Activated CD4-positive, alpha-beta T cell treated with anti-CD3 and anti-CD28 coated beads for 36 hours (primary cell): ENCODE measurements at regions of chr3 and their contacts with region 1.

Region 1: DNA sequence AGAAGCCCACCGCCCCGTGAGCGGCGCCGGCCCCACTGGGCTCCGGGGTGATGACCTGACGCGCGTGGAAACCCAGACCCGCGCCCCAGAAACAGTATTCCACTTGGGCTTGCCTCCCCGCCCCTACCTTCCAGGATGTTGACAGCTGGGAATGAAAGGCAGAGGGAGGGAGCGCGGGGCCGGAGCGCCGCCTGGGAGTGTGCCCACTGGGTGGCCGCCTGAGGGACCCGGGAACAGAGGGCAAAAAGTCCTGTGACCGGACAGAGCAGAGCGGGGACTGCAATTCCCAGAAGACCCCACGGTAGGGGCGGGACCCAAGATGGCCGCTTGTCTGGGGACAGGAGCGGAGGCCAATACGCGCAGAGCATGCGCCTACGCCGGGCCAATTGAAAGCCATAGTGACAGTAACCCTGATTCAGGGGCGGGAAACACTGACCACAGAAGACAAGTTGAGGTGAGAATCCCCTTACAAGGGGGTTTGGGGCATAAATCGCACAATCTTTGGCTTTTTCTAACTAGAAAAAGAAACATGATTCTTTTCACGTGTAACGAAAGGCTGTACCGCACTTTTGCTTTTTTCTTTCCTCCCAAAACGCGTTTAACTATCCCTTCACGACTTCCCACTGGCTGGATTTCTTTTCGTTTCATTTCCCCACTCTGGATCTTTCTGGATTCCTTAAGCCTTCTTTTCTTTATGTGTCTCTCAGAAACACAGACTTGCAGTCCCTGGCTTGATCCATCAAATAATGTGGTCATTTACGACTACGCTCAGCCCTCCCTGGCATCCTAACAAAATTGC is at the start of gene FHIT:
- DNase-seq: peak; percentile 96
- ATAC-seq: peak; percentile 95
- H3K4me3 Mint-ChIP-seq: peak within 1 kb of the TSS; percentile 84
- H3K27ac Mint-ChIP-seq: peak within 1 kb of the TSS; percentile 92
- H3K4me1 Mint-ChIP-seq: peaks cover 15% of the 10 kb centered on the region
- H3K27me3 Mint-ChIP-seq: peaks cover 2% of the 10 kb centered on the region
- total RNA-seq, gene FHIT: 10.2 to 13.1 TPM

Region 2: DNA sequence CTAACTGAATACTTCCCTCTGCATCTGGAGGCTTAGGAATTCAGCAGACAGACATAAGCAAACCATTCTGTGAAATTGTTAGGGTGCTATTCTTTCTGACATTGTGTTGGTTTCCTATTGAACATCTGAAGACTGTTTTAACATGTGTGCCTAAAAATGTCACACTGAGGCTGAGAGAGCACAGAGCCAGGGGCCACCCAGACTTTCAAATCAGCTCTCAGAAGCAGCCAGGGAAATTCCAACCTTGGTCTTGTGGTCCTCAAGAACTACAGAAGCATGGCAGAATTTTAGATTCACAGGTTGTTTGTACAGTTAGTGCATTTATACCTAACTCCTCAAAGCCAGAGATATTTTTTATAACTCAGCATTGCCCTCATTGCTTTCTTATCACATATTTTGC is 1272.4 kb before region 1 on chr3:
- CTCF ChIA-PET with region 1: no interaction called
- POLR2A ChIA-PET with region 1: no interaction called
- intact Hi-C with region 1: loop called in 1 of 2 experiments (anchors 10 kb)
- DNase-seq: peak; percentile 55
- ATAC-seq: peak; percentile 75
- H3K4me3 Mint-ChIP-seq: peak overlapping the region; percentile 21
- H3K27ac Mint-ChIP-seq: peak overlapping the region; percentile 89
- H3K4me1 Mint-ChIP-seq: peaks cover 55% of the 10 kb centered on the region
- H3K27me3 Mint-ChIP-seq: no peaks in the 10 kb centered on the region

Region 3: DNA sequence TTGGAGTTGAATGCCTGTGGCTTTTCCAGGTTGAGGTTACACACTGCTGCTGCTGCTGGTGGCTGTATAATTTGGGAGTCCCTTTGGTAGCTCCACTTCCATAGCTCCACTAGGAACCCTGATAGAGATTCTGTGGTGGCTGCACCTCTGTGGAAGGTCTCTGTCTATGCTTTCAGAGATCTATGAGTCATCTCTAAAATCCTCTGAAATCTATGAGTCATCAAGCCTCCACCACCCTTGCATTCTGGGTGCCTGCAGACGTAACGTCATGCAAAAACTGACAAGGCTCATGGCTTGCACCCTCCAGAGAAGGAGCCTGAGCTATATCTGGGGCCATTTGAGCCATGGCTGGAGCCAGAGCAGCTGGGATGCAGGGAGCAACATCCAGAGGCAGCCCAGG is 1164.6 kb before region 1 on chr3:
- CTCF ChIA-PET with region 1: no interaction called
- POLR2A ChIA-PET with region 1: no interaction called
- intact Hi-C with region 1: loop called in 1 of 2 experiments (anchors 10 kb)
- DNase-seq: peak; percentile 74
- ATAC-seq: peak; percentile 96
- H3K4me3 Mint-ChIP-seq: no peak overlapping the region
- H3K27ac Mint-ChIP-seq: peak overlapping the region; percentile 84
- H3K4me1 Mint-ChIP-seq: peaks cover 55% of the 10 kb centered on the region
- H3K27me3 Mint-ChIP-seq: no peaks in the 10 kb centered on the region